IMR-90 (cell line): ENCODE measurements at regions of chr14 and their contacts with region 1.

Region 1: DNA sequence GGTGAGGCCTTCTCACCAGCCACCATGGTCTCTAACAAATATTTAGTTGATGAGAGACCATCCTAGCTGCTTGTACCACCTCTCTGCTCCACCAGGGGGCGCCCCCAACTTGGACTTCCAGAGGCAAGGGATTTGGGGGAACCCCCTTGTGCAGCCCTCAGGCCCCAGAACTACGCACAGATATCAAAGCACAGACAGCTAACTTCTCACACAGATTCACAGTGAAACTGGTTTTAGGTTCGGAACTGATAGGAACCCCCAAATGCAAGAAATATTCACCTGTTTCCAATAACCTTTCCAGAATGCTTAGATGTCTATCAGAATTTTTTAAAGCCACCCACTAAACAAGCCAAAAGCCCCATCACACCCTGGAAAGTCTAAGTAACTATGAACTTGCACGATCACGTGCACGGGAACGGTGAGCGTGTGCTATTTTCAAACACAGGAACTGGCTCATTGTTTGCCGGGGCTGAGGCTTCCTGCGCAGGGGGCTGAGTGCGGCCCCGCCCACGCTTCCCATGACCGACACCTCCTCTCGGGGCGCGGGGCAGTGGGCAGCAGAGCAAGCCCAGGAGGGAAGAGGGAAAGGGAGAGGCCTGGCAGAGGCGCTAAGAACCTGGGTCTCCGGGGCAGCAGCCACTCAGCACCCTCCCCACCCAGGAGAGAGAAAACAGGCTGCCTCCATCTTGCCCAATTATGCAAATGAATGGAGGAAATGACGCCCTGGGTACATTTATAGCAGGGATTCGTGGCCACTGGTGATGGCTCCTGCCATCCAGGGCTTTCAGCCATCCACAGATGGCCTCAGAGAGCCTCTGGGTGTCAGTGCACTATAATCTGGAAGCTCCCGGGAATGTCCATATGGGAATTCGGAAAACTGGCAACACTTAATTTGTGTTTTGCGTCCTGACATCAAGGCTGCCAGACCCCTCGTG is 79.4 kb upstream of the GPR68 start:
- DNase-seq: peak; percentile 46
- ATAC-seq: peak; percentile 86
- H3K4me3 ChIP-seq: no peak overlapping the region
- H3K27ac ChIP-seq: no peak overlapping the region
- H3K4me1 ChIP-seq: no peaks in the 10 kb centered on the region
- H3K27me3 ChIP-seq: peaks cover 23% of the 10 kb centered on the region
- CTCF ChIP-seq: peak; percentile 81
- POLR2A ChIP-seq: no peak
- RAD21 ChIP-seq: peak; percentile 74

Region 2: GRCh38 chr14:90911121-90911520 is 412.8 kb before region 1 on chr14:
- CTCF ChIA-PET with region 1: no interaction called
- POLR2A ChIA-PET with region 1: interaction called, 15 read pairs
- dilution Hi-C with region 1: no loop called
- in situ Hi-C with region 1: no loop called
- intact Hi-C with region 1: no loop called
- DNase-seq: no peak
- ATAC-seq: peak; percentile 53
- H3K4me3 ChIP-seq: no peak overlapping the region
- H3K27ac ChIP-seq: no peak overlapping the region
- H3K4me1 ChIP-seq: no peaks in the 10 kb centered on the region
- H3K27me3 ChIP-seq: peaks cover 4% of the 10 kb centered on the region
- CTCF ChIP-seq: no peak
- POLR2A ChIP-seq: no peak
- RAD21 ChIP-seq: no peak

Region 3: GRCh38 chr14:91418387-91419043 is 94.6 kb after region 1 on chr14:
- CTCF ChIA-PET with region 1: interaction called, 9 read pairs
- POLR2A ChIA-PET with region 1: no interaction called
- dilution Hi-C with region 1: no loop called
- in situ Hi-C with region 1: loop called (anchors 10 kb)
- intact Hi-C with region 1: loop called (anchors 1 kb)
- DNase-seq: peak; percentile 17
- ATAC-seq: peak; percentile 90
- H3K4me3 ChIP-seq: peak overlapping the region; percentile 44
- H3K27ac ChIP-seq: no peak overlapping the region
- H3K4me1 ChIP-seq: no peaks in the 10 kb centered on the region
- H3K27me3 ChIP-seq: peaks cover 38% of the 10 kb centered on the region
- CTCF ChIP-seq: peak; percentile 77
- POLR2A ChIP-seq: no peak
- RAD21 ChIP-seq: peak; percentile 67